ENCODE measurements at regions of chr3 and their contacts with region 1.

Region 1: GRCh38 chr3:149969940-149970715 is 567 bp downstream of the PFN2 start:
- DNase-seq: peak; percentile 88
- ATAC-seq: peak; percentile 63 to 76

Region 2: GRCh38 chr3:150168698-150169097 is 198.6 kb after region 1 on chr3:
- intact Hi-C with region 1: loop called in 1 of 2 experiments (anchors 5 kb)
- DNase-seq: peak; percentile 42
- ATAC-seq: peak; percentile 90 to 94

Region 3: DNA sequence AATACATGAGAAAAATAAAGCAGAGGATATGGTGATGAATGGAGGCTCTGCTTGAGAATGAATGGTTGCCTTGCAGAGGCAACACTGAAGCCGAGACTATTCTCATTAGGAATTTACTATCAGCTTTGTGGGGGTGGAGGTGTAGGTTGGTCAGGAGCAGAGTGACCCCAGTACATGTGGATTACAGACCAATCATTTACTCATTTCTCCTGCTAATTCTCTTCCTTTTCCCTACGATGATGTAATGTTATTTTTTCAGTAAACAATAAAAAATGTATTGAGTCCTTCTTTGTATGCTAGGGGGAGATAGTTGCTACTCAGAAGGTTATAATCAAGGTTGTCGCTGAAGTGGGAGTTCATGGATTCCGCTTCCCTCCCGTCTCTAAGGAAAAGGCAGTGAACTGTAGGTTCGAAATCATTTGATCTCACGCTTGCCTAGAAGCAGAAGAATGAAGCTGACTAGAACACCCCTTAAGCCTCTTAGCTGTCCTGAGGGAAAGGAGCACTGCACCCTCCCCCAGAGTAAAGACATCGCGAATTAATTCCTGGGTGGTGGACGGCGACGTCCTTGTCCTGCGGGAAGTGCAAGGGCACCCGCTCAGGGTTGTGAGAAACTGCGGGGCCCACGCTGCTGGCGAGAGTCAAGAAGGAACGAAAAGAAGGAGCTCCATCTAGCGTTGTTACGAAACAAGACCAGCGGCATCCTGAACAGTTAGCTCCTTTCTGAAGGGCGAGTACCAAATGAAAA is 213.7 kb after region 1 on chr3:
- intact Hi-C with region 1: loop called (anchors 1 to 5 kb)
- DNase-seq: peak; percentile 79
- ATAC-seq: peak; percentile 93 to 98

Region 4: DNA sequence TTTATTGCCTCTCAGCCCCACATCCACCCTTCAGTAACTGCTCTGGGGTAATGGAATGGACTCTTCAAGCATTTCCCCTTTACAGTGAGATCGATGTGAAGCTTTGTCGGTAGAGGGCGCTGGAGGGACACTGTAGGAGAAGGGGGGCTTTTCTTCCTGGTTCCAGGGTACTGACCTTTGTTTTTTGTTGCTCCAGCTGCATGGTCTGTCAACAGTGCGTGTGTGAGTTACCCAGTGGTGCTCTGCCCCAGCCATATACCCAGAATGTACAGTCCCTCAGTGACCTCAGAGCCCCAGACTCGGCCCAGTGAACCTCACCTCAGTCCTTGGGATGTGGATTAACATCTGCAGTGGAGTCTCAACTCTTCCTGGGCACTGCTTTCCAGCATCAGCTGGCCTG is 257.7 kb after region 1 on chr3:
- intact Hi-C with region 1: loop called (anchors 10 kb)
- DNase-seq: peak; percentile 48
- ATAC-seq: peak; percentile 59 to 61

Measured in left cardiac atrium (tissue), 4 donors.